MCF 10A (cell line): ENCODE measurements at regions of chr22 and their contacts with region 1.

Region 1: DNA sequence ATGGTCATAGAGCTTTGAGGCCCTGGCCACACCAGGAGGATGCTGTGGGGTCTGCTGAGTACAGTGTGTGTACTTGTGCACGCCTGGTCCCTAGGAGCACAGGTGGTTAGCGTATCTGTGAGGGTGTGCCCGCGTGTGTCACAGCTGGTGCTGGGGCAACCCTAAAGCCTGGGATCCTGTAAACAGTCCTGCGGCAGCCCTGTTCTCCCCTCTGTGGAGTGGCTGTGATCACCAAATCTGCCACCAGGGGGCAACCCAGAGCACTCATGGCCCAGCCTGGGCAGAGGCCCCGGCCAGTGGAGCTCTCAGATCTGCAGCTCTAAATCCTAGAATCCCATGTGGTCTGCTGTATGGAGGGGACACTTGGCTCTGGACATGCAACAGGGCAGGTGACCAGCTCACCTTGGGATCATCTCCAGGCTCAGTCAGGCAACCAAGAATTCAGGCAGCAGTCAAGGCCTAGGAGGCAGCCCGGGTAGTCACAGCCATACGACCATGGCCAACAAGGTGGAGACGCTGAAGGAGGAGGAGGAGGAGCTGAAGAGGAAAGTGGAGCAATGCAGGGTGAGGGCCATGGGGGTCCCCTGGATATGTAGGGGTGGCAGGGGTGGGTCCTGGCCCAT is 3.9 kb downstream of the SH3BP1 start:
- DNase-seq: peak; percentile 77
- H3K4me3 Mint-ChIP-seq: no peak overlapping the region
- H3K27ac Mint-ChIP-seq: no peak overlapping the region
- H3K4me1 Mint-ChIP-seq: peaks cover 7% of the 10 kb centered on the region
- H3K27me3 Mint-ChIP-seq: no peaks in the 10 kb centered on the region
- CTCF ChIP-seq: peak; percentile 92

Region 2: DNA sequence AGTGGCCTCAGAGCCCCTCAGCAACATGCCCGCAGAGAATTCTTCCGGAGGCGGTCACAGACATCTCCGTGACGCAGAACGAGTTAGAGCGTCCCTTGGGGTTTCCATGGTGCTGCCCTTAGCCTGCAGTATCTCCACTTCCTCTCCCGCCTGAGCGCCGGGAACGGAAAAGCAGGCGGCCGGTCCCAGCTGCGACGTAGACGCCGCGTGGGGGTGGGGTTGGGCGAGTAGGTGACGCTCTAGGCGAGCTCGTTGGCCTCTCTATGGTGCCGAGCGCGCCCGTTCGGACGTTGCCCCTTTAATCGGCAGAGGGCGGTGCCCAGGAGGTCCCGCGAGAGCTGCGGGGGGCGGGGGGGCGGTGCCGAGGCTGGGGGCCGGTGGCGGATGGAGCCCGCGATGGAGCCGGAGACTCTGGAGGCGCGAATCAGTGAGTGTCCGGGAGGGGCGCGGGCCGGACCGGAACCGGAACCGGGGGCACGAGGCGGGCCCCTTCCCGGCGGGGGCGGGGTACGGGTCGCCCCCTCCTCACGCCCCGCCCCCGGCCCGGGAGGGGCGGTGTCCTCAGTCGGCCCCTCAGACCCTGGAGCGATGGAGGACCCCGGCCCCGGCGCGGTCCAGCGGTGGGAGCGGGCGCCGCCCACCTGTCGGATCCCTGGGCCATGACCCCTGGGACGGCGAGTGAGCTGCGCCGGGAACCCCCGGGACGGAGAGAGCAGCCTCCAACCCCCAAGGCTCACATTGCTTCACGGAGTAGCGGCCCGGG is 34.7 kb before region 1 on chr22 and contains the start of gene GGA1:
- CTCF ChIA-PET with region 1: interaction called, 14 read pairs
- POLR2A ChIA-PET with region 1: interaction called, 3 read pairs
- intact Hi-C with region 1: no loop called
- DNase-seq: peak; percentile 96
- H3K4me3 Mint-ChIP-seq: peak within 1 kb of the TSS; percentile 85
- H3K27ac Mint-ChIP-seq: peak within 1 kb of the TSS; percentile 98
- H3K4me1 Mint-ChIP-seq: peaks cover 12% of the 10 kb centered on the region
- H3K27me3 Mint-ChIP-seq: no peaks in the 10 kb centered on the region
- CTCF ChIP-seq: no peak
- total RNA-seq, gene GGA1: 52.7 and 59.1 TPM in 2 replicates

Region 3: DNA sequence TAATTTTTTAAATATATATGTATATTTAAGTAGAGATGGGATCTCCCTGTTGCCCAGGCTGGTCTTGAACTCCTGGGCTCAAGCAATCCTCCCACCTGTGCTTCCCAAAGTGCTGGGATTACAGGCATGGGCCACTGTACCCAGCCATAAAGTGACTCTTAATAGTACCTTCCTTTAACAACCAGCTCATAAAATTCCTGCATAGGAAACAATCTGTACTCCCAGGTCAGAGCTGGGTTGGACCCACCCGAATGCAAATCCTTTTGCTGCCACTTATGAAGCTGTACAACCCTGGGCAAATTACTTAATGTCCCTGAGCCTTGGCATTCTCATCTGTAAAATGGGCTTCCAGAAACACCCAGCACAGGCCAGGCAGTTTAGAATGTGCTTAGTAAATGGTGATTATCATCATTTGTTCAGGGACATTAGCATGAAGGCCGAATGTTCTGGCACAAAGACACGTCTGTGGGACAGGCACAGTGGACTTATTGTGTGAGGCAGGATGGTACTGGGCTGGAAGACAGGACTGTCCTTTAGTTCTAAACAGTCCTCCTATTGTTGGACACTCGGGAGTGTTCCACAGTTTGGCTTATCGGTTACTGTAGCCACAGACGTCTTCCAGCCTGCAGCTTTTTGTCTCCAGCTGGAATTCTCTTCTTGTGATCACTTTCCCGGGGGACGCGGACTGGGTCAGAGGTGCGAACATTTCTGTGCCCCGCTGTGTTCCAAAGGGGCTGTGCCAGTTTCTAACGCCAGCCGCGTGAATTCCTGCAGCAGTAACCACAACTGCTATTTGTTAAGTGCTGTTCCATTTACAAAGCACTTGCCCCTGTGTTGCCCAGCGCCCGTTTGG is 21.1 kb after region 1 on chr22:
- CTCF ChIA-PET with region 1: interaction called, 32 read pairs
- POLR2A ChIA-PET with region 1: interaction called, 34 read pairs
- intact Hi-C with region 1: no loop called
- DNase-seq: no peak
- H3K4me3 Mint-ChIP-seq: no peak overlapping the region
- H3K27ac Mint-ChIP-seq: no peak overlapping the region
- H3K4me1 Mint-ChIP-seq: peaks cover 10% of the 10 kb centered on the region
- H3K27me3 Mint-ChIP-seq: no peaks in the 10 kb centered on the region
- CTCF ChIP-seq: no peak

Region 4: DNA sequence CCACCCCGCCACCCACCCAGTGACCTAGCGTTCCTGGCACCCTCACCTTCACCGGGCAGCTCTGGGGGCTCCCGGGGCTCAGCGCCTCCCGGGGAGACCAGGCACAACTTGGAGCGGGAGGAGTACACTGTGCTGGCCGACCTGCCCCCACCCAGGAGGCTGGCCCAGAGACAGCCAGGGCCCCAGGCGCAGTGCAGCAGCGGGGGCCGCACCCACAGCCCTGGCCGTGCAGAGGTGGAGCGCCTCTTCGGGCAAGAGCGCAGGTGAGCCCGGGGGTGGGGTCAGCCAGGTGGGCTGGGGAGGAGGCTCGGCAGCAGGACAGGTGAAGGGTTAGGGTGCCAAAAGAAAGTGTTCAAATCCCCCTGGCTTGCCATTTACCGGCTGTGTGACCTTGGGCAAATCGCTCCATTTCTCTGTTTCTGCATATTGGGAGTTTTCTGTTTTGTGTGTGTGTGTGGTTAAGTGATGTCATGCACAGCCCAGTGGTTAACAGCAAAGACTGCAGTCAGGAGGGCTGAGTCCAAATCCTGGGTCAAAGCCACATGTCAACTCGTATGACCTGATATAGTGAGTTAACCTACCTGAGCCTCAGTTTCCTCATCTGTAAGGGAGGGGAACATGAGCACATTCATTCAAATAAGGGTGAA is 83.0 kb after region 1 on chr22:
- CTCF ChIA-PET with region 1: interaction called, 6 read pairs
- POLR2A ChIA-PET with region 1: no interaction called
- intact Hi-C with region 1: loop called (anchors 1 kb)
- DNase-seq: peak; percentile 31
- H3K4me3 Mint-ChIP-seq: no peak overlapping the region
- H3K27ac Mint-ChIP-seq: no peak overlapping the region
- H3K4me1 Mint-ChIP-seq: no peaks in the 10 kb centered on the region
- H3K27me3 Mint-ChIP-seq: peaks cover 20% of the 10 kb centered on the region
- CTCF ChIP-seq: no peak

Region 5: DNA sequence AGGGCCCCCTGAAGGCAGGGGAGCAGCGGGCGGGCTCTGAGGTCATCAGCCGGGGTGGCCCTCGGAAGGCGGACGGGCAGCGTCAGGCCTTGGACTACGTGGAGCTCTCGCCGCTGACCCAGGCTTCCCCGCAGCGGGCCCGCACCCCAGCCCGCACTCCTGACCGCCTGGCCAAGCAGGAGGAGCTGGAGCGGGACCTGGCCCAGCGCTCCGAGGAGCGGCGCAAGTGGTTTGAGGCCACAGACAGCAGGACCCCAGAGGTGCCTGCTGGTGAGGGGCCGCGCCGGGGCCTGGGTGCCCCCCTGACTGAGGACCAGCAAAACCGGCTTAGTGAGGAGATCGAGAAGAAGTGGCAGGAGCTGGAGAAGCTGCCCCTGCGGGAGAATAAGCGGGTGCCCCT is 114.3 kb after region 1 on chr22:
- CTCF ChIA-PET with region 1: interaction called, 15 read pairs
- POLR2A ChIA-PET with region 1: interaction called, 3 read pairs
- intact Hi-C with region 1: no loop called
- DNase-seq: no peak
- H3K4me3 Mint-ChIP-seq: no peak overlapping the region
- H3K27ac Mint-ChIP-seq: no peak overlapping the region
- H3K4me1 Mint-ChIP-seq: peaks cover 16% of the 10 kb centered on the region
- H3K27me3 Mint-ChIP-seq: no peaks in the 10 kb centered on the region
- CTCF ChIP-seq: no peak

Region 6: GRCh38 chr22:37792494-37792893 is 149.2 kb after region 1 on chr22:
- CTCF ChIA-PET with region 1: interaction called, 83 read pairs
- POLR2A ChIA-PET with region 1: interaction called, 3 read pairs
- intact Hi-C with region 1: loop called (anchors 1 kb)
- DNase-seq: no peak
- H3K4me3 Mint-ChIP-seq: no peak overlapping the region
- H3K27ac Mint-ChIP-seq: no peak overlapping the region
- H3K4me1 Mint-ChIP-seq: peaks cover 5% of the 10 kb centered on the region
- H3K27me3 Mint-ChIP-seq: no peaks in the 10 kb centered on the region
- CTCF ChIP-seq: no peak